Right ventricle myocardium superior (tissue), 1 donor: ENCODE measurements at regions of chr12 and their contacts with region 1.

Region 1: DNA sequence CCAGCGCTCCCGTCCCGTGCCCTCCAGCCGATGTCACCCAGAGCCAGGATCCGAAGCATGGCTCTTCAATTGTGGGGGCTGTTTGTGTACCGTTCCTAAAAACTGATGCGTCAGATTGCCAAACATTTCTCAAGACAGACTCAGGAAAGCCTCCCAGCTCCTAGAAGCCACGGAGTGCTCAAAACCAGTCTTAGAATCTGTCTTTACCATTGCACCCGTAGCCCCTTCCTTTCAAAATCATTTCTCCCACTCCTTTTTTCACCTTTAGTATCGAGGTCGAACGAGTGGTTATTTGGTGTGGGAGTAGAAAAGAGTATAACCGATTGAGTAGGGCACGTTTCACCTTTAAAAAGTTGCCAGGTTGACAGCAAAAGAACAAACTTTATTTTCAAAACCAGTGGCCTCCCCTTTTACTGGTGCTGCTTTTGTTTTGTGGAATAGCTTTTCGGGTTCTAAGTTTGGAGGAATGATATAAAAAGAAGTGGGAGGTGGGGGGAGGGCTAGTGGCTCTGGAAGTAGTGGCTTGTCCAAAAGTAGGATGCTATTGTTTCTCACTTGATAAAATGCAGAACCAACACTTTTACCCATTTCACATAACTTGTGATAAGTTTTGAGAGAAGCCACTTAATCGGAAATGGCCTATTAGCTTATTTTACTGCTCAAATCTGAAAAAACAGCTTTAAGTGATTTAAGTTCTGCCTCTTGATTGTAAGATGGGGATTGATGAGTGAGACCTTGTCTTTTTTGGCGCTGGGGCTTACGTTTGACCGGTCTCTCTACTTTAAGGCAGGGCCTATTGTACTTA is 800 bp downstream of the STK38L start:
- DNase-seq: no peak
- ATAC-seq: no peak

Region 2: DNA sequence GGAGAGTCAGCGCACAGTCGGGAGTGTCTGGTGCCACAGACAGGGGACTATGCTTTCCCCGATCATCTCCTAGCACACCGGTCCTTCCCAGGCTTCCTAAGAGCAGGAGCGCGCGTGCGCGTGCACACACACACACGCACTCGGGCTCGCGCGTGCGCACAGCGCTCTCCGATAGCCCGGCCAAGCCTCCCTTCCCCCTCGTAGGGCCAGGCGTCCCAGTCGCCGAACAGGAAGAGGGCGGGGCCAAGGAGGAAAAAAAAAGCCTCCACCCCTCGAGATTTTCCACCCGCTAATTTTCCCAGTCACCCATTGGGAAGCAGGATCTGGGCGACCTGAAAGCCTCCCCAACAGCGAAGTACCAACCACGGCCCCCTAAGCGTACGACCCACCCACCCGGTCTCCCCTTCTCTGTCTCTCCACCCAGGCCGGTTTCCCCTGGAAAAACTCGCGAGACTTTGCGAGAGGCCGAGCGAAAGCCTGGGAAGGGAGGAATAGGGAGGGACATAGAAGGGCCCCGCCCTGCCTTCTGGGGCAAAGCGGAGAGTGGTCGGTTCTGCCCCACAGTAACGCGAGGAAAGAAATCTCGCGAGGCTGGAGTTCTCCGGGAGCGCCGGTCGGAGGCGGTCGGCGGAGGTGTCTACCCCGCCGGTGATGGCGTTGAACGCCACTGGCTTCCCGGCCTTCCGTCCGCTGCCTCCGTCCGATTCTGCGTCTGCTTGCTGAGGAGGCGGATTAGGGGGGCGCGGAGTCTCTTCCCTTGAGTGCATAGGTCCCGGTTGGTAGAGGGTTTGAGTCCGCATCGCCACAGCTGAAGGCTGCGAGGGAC is 306.8 kb before region 1 on chr12 and contains the starts of genes FGFR1OP2 and INTS13:
- intact Hi-C with region 1: loop called (anchors 5 kb)
- DNase-seq: peak; percentile 100
- ATAC-seq: peak; percentile 98
- total RNA-seq, gene FGFR1OP2: 30.0 TPM
- total RNA-seq, gene INTS13: 27.0 TPM

Region 3: DNA sequence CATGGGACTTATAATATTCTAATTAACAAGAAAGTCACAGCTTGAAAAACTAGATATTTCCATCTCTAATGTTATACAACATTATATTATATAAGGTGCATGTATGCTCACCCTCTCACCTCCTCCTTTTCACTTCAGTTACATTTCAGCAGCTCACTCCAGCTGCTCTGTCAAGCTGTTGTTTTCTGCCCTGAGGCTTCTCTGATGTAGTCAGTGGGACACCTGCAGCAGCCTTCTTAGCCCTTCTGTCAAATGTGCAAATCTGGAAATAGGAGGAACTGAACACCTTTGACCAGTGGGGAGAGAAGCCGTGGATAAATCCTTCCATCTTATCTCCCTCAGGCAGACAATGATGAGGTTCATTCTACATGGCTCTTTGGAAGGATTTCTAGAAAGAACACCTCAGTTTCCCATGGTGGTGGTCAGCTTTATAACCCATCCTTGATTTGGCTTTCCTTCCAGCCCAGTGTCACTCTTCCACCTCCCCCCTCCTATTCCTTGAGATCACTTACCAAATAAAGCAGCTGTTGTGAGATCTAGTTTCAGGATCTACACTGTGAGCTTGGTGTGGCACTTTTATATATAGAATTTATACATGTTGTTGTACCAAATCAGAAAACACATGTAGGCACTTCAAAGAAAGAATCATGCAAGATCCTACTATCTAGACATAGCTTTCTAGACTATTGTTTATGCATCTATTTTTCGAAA is 80.4 kb before region 1 on chr12:
- intact Hi-C with region 1: no loop called
- DNase-seq: no peak
- ATAC-seq: no peak

Region 4: GRCh38 chr12:27179400-27180214 is 65.3 kb before region 1 on chr12:
- intact Hi-C with region 1: no loop called
- DNase-seq: no peak
- ATAC-seq: peak; percentile 93

Region 5: DNA sequence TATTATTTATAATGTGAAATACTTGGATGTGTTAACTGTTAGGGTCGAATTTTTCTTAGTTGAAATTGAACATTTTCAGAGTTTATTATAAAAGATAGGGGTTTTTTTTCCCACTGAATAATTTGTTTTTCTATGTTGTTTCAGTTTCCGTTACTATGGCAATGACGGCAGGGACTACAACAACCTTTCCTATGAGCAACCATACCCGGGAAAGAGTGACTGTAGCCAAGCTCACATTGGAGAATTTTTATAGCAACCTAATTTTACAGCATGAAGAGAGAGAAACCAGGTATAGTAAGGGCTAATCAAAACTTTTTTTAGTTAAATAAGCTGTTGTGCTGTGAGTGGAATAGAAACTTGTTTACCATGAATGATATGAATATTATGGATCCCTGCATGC is 52.7 kb after region 1 on chr12:
- intact Hi-C with region 1: loop called (anchors 5 kb)
- DNase-seq: no peak
- ATAC-seq: no peak

Region 6: GRCh38 chr12:27309293-27309994 is 64.6 kb after region 1 on chr12:
- intact Hi-C with region 1: no loop called
- DNase-seq: no peak
- ATAC-seq: no peak